K562 (cell line): ENCODE measurements at regions of chr2 and their contacts with region 1.

Region 1: DNA sequence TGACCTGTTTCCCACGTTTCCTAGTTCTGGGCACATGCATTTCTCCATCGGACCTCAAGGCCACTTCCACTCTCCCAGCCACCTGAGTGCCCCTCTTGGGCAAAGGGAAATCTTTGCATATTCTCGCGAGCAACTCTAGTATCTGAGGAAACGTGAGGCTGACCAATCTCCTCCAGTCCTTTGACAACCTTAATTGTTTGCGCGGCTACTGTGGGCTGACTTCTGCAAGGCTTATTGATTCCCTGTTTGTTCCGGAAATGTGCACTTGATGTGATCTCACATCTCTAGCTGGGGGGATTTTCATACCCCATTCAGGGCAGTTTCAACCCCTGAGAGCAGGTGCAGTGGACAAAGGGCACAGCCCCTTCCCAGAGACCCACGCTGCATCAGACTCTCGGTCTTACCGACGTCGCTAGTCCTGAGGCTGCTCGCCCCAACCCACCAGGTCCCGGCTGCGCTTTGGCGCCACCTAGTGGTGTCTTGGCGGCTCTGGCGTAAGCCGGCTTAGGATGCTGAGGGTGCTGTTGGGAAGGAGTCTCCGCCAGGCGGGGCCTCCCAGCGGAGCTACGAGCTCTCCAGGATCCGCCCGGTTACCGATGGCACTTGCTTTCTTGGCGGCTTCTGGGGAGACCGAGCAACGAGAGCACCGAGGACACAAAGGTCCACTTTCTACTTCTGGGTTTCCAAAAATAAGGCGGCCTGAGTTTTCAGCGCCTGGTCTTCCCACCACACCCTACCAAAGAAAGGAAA is 24.8 kb upstream of the SPR start:
- DNase-seq: peak; percentile 91 to 94 (median 92)
- ATAC-seq: peak; percentile 100
- H3K4me3 ChIP-seq: no peak overlapping the region
- H3K27ac ChIP-seq: no peak overlapping the region
- H3K4me1 ChIP-seq: peaks cover 3 to 8% of the 10 kb centered on the region in 2 experiments; a peak in 3 of 5 replicates
- H3K27me3 ChIP-seq: peaks cover 2 to 5% of the 10 kb centered on the region in 2 experiments; a peak in 1 of 5 replicates
- CTCF ChIP-seq: peak; percentile 98
- EP300 ChIP-seq: no peak
- POLR2A ChIP-seq: no peak
- RAD21 ChIP-seq: peak; percentile 73 to 89

Region 2: GRCh38 chr2:72770879-72771461 is 91.4 kb before region 1 on chr2:
- CTCF ChIA-PET with region 1: interaction called, 32 read pairs
- POLR2A ChIA-PET with region 1: no interaction called
- in situ Hi-C with region 1: no loop called
- intact Hi-C with region 1: loop called (anchors 1 kb)
- DNase-seq: peak; percentile 41 to 76 (median 54)
- ATAC-seq: peak; percentile 76
- H3K4me3 ChIP-seq: no peak overlapping the region
- H3K27ac ChIP-seq: no peak overlapping the region
- H3K4me1 ChIP-seq: no peaks in the 10 kb centered on the region
- H3K27me3 ChIP-seq: no peaks in the 10 kb centered on the region; a peak in 1 of 5 replicates
- CTCF ChIP-seq: peak; percentile 66 to 94 (median 69); a peak in 5 of 6 replicates
- EP300 ChIP-seq: no peak
- POLR2A ChIP-seq: no peak
- RAD21 ChIP-seq: peak; percentile 96

Region 3: GRCh38 chr2:72815655-72816268 is 46.7 kb before region 1 on chr2:
- CTCF ChIA-PET with region 1: interaction called, 3 read pairs
- POLR2A ChIA-PET with region 1: no interaction called
- in situ Hi-C with region 1: no loop called
- intact Hi-C with region 1: loop called (anchors 5 kb)
- DNase-seq: peak in 1 of 4 experiments; percentile 33
- ATAC-seq: no peak
- H3K4me3 ChIP-seq: no peak overlapping the region
- H3K27ac ChIP-seq: no peak overlapping the region
- H3K4me1 ChIP-seq: no peaks in the 10 kb centered on the region
- H3K27me3 ChIP-seq: peaks cover 3 to 4% of the 10 kb centered on the region in 2 experiments; a peak in 3 of 5 replicates
- CTCF ChIP-seq: peak; percentile 19 to 47 (median 32); a peak in 4 of 6 replicates
- EP300 ChIP-seq: no peak
- POLR2A ChIP-seq: no peak
- RAD21 ChIP-seq: no peak; a peak in 2 of 4 replicates

Region 4: GRCh38 chr2:72846538-72847095 is 15.8 kb before region 1 on chr2:
- CTCF ChIA-PET with region 1: no interaction called
- POLR2A ChIA-PET with region 1: no interaction called
- in situ Hi-C with region 1: no loop called
- intact Hi-C with region 1: no loop called
- DNase-seq: no peak
- ATAC-seq: no peak
- H3K4me3 ChIP-seq: no peak overlapping the region
- H3K27ac ChIP-seq: no peak overlapping the region
- H3K4me1 ChIP-seq: no peaks in the 10 kb centered on the region
- H3K27me3 ChIP-seq: peaks cover 10 to 17% of the 10 kb centered on the region in 2 experiments
- CTCF ChIP-seq: no peak
- EP300 ChIP-seq: no peak
- POLR2A ChIP-seq: no peak
- RAD21 ChIP-seq: no peak

Region 5: GRCh38 chr2:72892506-72893173 is 30.2 kb after region 1 on chr2:
- CTCF ChIA-PET with region 1: no interaction called
- POLR2A ChIA-PET with region 1: no interaction called
- in situ Hi-C with region 1: no loop called
- intact Hi-C with region 1: no loop called
- DNase-seq: peak in 3 of 4 experiments; percentile 54 to 63 (median 55)
- ATAC-seq: peak; percentile 73
- H3K4me3 ChIP-seq: no peak overlapping the region
- H3K27ac ChIP-seq: no peak overlapping the region
- H3K4me1 ChIP-seq: peaks cover 6 to 10% of the 10 kb centered on the region in 2 experiments; a peak in 3 of 5 replicates
- H3K27me3 ChIP-seq: peaks cover 3 to 33% of the 10 kb centered on the region in 2 experiments; a peak in 3 of 5 replicates
- CTCF ChIP-seq: peak; percentile 69 to 76 (median 75)
- EP300 ChIP-seq: no peak
- POLR2A ChIP-seq: no peak
- RAD21 ChIP-seq: peak; percentile 56 to 73